Uterus (tissue), 4 donors: ENCODE measurements at regions of chr22 and their contacts with region 1.

Region 1: GRCh38 chr22:46013460-46014416 is 36.8 kb upstream of the WNT7B start:
- DNase-seq: peak; percentile 97 to 98
- H3K4me3 ChIP-seq: peak overlapping the region; percentile 52 to 80
- H3K27ac ChIP-seq: peak overlapping the region; percentile 97 to 99
- H3K4me1 ChIP-seq: peaks cover 4 to 18% of the 10 kb centered on the region in 2 donors
- H3K27me3 ChIP-seq: no peaks in the 10 kb centered on the region
- CTCF ChIP-seq: peak; percentile 56 to 77 (median 60)
- POLR2A ChIP-seq: peak; percentile 58 to 84

Region 2: DNA sequence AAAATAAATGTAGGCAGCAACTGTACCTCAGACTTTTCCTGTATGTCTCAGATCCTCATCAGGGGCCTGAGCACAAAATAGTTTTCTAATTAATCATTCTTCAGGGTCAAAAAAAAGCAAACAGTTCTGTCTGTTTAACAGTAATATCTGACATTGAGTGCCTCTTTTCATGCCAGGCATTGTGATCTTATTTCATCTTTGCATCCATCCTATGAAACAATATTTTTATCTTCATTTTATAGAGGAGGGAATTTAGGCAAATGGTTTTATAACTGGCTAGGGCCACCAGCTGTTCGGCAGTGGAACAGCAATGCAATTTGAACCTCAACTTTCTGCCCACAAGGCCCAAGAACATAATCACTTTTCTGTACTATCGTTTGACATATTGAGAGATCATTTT is 182.3 kb before region 1 on chr22:
- intact Hi-C with region 1: no loop called
- DNase-seq: no peak
- H3K4me3 ChIP-seq: no peak overlapping the region
- H3K27ac ChIP-seq: no peak overlapping the region
- H3K4me1 ChIP-seq: no peaks in the 10 kb centered on the region
- H3K27me3 ChIP-seq: no peaks in the 10 kb centered on the region
- CTCF ChIP-seq: peak in 1 of 4 experiments; percentile 10
- POLR2A ChIP-seq: no peak

Region 3: DNA sequence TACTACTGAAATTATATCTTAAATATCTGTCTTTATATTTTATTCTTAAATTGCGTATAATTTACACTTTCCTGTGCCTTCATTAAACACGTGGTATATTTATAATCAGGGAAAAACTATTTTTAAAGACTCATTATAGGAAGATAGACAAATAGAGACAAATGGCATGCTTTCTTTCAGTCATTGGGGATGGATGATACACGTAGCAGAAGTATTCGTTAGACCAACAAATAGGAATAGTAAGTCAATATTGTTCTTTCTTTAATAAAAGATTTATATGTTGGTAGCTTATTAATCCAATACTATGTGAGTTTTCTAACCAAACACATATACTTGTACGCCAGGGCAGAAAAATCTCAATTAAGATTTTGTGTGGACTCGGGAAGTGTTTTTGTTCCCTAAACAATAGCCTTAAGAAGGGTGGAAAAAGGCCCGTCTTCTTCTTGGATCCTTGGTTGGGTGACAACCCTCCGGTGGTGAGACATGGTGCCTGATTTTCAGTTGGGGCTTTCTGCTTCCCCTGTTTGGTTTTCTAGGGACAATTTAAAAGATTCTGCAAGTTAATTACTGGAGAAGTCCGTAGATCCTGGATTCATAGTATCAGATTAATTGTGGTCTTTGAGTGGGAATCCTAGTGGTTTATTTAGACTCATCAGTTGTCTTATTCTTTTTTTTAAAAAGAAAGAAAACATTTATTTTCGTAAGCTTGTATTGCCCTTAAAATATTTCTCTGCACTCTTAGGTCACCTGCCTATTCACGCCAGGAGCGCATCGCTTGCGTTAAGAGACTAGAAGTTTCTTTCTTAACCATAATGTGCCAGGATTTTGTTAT is 46.8 kb after region 1 on chr22:
- intact Hi-C with region 1: no loop called
- DNase-seq: peak in 1 of 2 donors; percentile 19
- H3K4me3 ChIP-seq: no peak overlapping the region
- H3K27ac ChIP-seq: peak overlapping the region; percentile 100
- H3K4me1 ChIP-seq: peaks cover 11 to 27% of the 10 kb centered on the region in 2 donors
- H3K27me3 ChIP-seq: no peaks in the 10 kb centered on the region
- CTCF ChIP-seq: no peak
- POLR2A ChIP-seq: no peak

Region 4: DNA sequence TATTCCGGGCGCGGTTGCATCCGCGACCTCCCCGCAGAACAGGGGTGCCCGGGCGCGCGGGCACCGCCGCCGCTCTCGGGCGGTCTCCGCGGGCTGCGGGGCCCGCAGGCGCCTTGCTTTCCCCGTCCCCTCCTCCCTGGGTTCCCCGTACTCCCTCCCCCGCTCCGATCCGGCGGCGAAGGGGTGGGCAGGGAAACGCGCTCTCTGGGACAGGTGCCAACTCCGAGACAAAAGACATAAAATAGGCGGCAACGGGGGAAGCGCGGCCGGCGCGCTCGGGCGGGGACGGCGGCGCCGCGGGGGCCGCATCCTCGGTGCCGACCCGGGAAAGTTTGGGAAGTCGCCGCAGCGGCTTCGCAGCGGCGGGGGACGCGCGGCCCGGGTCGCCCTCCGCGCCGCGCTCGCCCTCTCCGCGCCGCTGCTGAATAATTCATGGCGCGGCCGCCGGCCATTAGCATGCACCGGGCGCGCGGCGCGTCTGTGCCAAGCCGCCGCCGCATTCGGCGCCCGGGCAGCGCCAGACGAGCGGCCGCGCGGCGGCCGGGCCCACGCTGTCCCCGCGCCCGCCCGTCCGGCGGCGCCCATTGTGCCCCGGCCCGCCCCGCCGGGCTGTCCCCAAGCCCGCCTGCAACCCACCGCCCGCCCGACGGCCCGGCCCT is 57.8 kb after region 1 on chr22:
- intact Hi-C with region 1: loop called (anchors 10 kb)
- DNase-seq: peak; percentile 95 to 97
- H3K4me3 ChIP-seq: peak overlapping the region; percentile 88 to 94
- H3K27ac ChIP-seq: peak overlapping the region; percentile 99 to 100
- H3K4me1 ChIP-seq: peaks cover 0 to 7% of the 10 kb centered on the region in 2 donors
- H3K27me3 ChIP-seq: no peaks in the 10 kb centered on the region
- CTCF ChIP-seq: peak in 1 of 4 experiments; percentile 1
- POLR2A ChIP-seq: peak; percentile 63 to 87